ENCODE measurements at regions of chr1 and their contacts with region 1.

Region 1: GRCh38 chr1:203486618-203487370 is 7.2 kb upstream of the OPTC start:
- DNase-seq: no peak
- H3K4me3 Mint-ChIP-seq: peak overlapping the region; percentile 61
- H3K27ac Mint-ChIP-seq: no peak overlapping the region
- H3K4me1 Mint-ChIP-seq: peaks cover 10% of the 10 kb centered on the region
- H3K27me3 Mint-ChIP-seq: peaks cover 8% of the 10 kb centered on the region

Region 2: GRCh38 chr1:203273206-203273868 is 213.5 kb before region 1 on chr1:
- intact Hi-C with region 1: loop called (anchors 1 kb)
- DNase-seq: peak; percentile 85
- H3K4me3 Mint-ChIP-seq: peak overlapping the region; percentile 72
- H3K27ac Mint-ChIP-seq: peak overlapping the region; percentile 79
- H3K4me1 Mint-ChIP-seq: peaks cover 58% of the 10 kb centered on the region
- H3K27me3 Mint-ChIP-seq: no peaks in the 10 kb centered on the region

Region 3: GRCh38 chr1:204341380-204341779 is 854.6 kb after region 1 on chr1:
- intact Hi-C with region 1: no loop called
- DNase-seq: no peak
- H3K4me3 Mint-ChIP-seq: no peak overlapping the region
- H3K27ac Mint-ChIP-seq: no peak overlapping the region
- H3K4me1 Mint-ChIP-seq: no peaks in the 10 kb centered on the region
- H3K27me3 Mint-ChIP-seq: peaks cover 6% of the 10 kb centered on the region

Measured in activated T-helper 1 cell treated with anti-CD3 and anti-CD28 coated beads, Interleukin-12 subunit alpha, Interleukin-12 subunit beta, Interleukin-2, Interleukin-4 antibody, amounts not matched to agents 30 ng/mL and 10 ng/mL and 1 ng/mL, durations not matched to agents 14 hours and 24 hours and 36 hours (primary cell).